H1 (cell line): ENCODE measurements at regions of chr3 and their contacts with region 1.

Region 1: GRCh38 chr3:15268033-15268631 is 62.1 kb downstream of the CAPN7 start:
- DNase-seq: peak; percentile 53 to 87
- H3K4me3 ChIP-seq: no peak overlapping the region
- H3K27ac ChIP-seq: no peak overlapping the region
- H3K4me1 ChIP-seq: no peaks in the 10 kb centered on the region; a peak in 1 of 7 replicates
- H3K27me3 ChIP-seq: no peaks in the 10 kb centered on the region
- CTCF ChIP-seq: peak; percentile 94 to 98 (median 96)
- EP300 ChIP-seq: no peak
- POLR2A ChIP-seq: no peak
- RAD21 ChIP-seq: peak; percentile 98 to 99

Region 2: DNA sequence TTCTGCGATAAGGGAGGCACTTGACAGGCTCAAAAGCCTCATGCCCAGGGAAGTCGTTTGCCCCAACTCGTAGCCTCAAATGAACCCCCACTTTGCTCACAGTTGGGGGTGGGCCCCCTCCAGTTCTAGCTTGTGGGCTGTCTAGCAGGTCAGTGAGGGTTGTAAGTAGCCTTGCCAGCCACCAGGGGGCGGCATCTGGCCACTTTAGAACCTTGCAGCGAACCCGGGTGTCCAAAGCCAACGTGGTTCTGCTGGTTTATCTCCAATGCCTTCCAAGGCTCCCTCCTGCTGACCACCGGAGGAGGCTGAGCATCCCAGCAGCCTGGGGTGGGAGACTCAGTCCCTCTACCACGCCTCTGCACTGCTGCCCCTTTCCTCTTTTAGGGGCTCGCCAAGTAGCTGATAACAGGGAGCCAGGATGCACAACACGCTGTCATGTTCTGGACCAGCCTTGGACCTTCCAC is 160.0 kb before region 1 on chr3:
- CTCF ChIA-PET with region 1: interaction called, 11 read pairs
- POLR2A ChIA-PET with region 1: no interaction called
- DNase-seq: peak; percentile 68 to 91
- H3K4me3 ChIP-seq: no peak overlapping the region
- H3K27ac ChIP-seq: no peak overlapping the region
- H3K4me1 ChIP-seq: no peaks in the 10 kb centered on the region; a peak in 1 of 7 replicates
- H3K27me3 ChIP-seq: no peaks in the 10 kb centered on the region
- CTCF ChIP-seq: peak; percentile 88 to 93 (median 89)
- EP300 ChIP-seq: no peak
- POLR2A ChIP-seq: no peak
- RAD21 ChIP-seq: peak; percentile 92 to 95

Region 3: GRCh38 chr3:15180042-15180611 is 88.0 kb before region 1 on chr3:
- CTCF ChIA-PET with region 1: no interaction called
- POLR2A ChIA-PET with region 1: no interaction called
- DNase-seq: no peak
- H3K4me3 ChIP-seq: no peak overlapping the region
- H3K27ac ChIP-seq: no peak overlapping the region
- H3K4me1 ChIP-seq: no peaks in the 10 kb centered on the region
- H3K27me3 ChIP-seq: no peaks in the 10 kb centered on the region; a peak in 2 of 7 replicates
- CTCF ChIP-seq: no peak
- EP300 ChIP-seq: no peak
- POLR2A ChIP-seq: no peak
- RAD21 ChIP-seq: no peak

Region 4: DNA sequence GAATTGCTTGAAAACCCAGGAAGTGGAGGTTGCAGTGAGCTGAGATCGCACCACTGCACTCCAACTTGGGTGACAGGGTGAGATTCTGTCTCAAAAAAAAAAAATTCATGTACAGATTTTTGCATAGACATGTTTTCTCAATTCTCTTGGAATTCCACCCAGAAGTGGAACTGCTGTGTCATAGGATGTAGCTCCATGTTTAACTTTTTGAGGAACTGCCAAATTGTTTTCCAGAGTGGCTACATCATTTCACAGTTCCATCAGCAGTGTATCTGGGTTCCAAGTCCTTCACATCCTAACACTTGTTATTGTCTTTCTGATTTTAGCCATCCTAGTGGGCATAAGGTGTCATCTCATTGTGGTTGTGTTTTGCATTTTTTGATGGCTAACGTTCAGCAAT is 52.1 kb before region 1 on chr3:
- CTCF ChIA-PET with region 1: no interaction called
- POLR2A ChIA-PET with region 1: no interaction called
- DNase-seq: no peak
- H3K4me3 ChIP-seq: no peak overlapping the region
- H3K27ac ChIP-seq: 0 out of 2 replicates have a peak overlapping the region, but pooled peaks have one; percentile 10
- H3K4me1 ChIP-seq: no peaks in the 10 kb centered on the region
- H3K27me3 ChIP-seq: no peaks in the 10 kb centered on the region
- CTCF ChIP-seq: no peak
- EP300 ChIP-seq: no peak
- POLR2A ChIP-seq: no peak
- RAD21 ChIP-seq: no peak

Region 5: GRCh38 chr3:15256861-15257341 is 11.2 kb before region 1 on chr3:
- CTCF ChIA-PET with region 1: interaction called, 42 read pairs
- POLR2A ChIA-PET with region 1: no interaction called
- DNase-seq: no peak
- H3K4me3 ChIP-seq: no peak overlapping the region
- H3K27ac ChIP-seq: no peak overlapping the region
- H3K4me1 ChIP-seq: no peaks in the 10 kb centered on the region
- H3K27me3 ChIP-seq: no peaks in the 10 kb centered on the region
- CTCF ChIP-seq: no peak
- EP300 ChIP-seq: no peak
- POLR2A ChIP-seq: no peak
- RAD21 ChIP-seq: no peak

Region 6: GRCh38 chr3:15307580-15307979 is 39.4 kb after region 1 on chr3:
- CTCF ChIA-PET with region 1: interaction called, 19 read pairs
- POLR2A ChIA-PET with region 1: interaction called, 3 read pairs
- DNase-seq: no peak
- H3K4me3 ChIP-seq: no peak overlapping the region
- H3K27ac ChIP-seq: no peak overlapping the region
- H3K4me1 ChIP-seq: peaks cover 0 to 8% (median 5%) of the 10 kb centered on the region in 4 experiments; a peak in 3 of 7 replicates
- H3K27me3 ChIP-seq: no peaks in the 10 kb centered on the region
- CTCF ChIP-seq: no peak
- EP300 ChIP-seq: no peak
- POLR2A ChIP-seq: no peak
- RAD21 ChIP-seq: no peak

Region 7: DNA sequence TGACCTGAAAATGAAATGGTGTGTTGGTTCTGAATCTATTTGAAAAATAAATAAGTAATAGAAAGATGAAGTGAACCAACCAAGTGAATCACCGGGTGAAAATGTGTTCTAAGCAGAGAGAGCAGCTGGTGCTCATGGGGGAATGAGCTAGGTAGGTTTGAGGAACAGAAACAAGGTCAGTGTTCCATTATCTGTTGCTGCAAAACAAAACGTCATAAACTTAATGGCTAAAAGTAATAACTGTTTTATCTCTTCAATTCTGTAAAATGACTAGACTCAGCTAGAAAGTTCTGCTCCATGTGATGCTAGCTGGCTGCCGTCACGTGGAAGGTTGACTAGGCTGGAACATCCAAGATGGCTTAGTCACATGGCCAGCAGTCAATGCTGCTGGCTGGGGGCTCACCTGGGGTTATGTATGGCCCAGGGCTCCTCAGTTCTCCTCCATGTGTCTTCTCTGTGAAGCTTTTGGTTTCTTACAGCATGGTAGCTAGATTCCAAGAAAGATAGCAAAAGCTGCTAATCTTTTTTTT is 77.5 kb after region 1 on chr3:
- CTCF ChIA-PET with region 1: interaction called, 25 read pairs
- POLR2A ChIA-PET with region 1: no interaction called
- DNase-seq: no peak
- H3K4me3 ChIP-seq: no peak overlapping the region
- H3K27ac ChIP-seq: no peak overlapping the region
- H3K4me1 ChIP-seq: no peaks in the 10 kb centered on the region
- H3K27me3 ChIP-seq: no peaks in the 10 kb centered on the region
- CTCF ChIP-seq: no peak
- EP300 ChIP-seq: no peak
- POLR2A ChIP-seq: no peak
- RAD21 ChIP-seq: no peak

Region 8: DNA sequence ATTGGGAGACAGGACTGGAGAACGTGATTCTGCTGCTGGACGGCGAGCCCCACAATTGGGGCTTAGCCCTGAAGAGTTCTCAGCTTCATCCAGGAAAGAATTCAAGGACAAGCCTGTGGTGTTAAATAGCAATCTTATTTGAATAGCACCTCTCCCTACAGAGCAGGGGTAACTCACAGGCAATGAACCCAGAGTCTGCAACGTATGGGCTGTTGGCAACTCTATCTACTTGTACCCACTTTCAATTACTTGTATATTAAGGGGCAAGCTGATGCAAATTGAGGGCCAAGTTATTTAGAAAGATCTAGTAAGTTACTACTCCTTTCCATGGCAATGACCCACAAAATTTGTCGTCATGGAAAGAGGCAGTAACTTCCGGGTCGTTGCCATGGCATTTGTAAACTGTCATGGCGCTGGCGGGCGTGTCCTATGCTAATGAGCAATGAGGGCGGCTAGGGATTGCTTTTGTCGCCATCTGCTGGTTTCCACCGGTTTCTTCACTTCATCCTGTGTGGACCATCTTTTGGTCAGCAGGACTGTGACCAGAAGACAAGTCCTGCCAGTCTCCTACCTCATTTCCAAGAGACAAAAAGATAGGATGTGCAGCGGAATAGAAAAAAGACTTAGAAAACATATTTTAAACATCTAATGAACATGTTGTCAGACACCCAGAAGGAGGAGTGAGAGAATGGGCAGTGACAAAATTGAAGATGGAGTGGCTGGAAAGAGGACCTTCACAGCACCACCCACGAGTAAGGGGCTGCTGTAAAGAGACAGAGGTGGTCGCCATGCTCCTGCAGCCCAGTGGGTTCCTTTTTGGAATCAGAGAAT is 110.0 kb after region 1 on chr3:
- CTCF ChIA-PET with region 1: interaction called, 50 read pairs
- POLR2A ChIA-PET with region 1: no interaction called
- DNase-seq: peak; percentile 66 to 91
- H3K4me3 ChIP-seq: peak overlapping the region in 1 of 4 experiments; percentile 32; a peak in 2 of 8 replicates
- H3K27ac ChIP-seq: peak overlapping the region; percentile 79
- H3K4me1 ChIP-seq: peaks cover 0 to 3% (median 0%) of the 10 kb centered on the region in 4 experiments; a peak in 3 of 7 replicates
- H3K27me3 ChIP-seq: no peaks in the 10 kb centered on the region
- CTCF ChIP-seq: peak; percentile 67 to 86 (median 81)
- EP300 ChIP-seq: peak in 1 of 2 experiments; percentile 59; a peak in 1 of 3 replicates
- POLR2A ChIP-seq: no peak
- RAD21 ChIP-seq: peak; percentile 81 to 85

Region 9: GRCh38 chr3:15405448-15406050 is 137.4 kb after region 1 on chr3:
- CTCF ChIA-PET with region 1: interaction called, 227 read pairs
- POLR2A ChIA-PET with region 1: interaction called, 5 read pairs
- DNase-seq: no peak
- H3K4me3 ChIP-seq: no peak overlapping the region
- H3K27ac ChIP-seq: no peak overlapping the region
- H3K4me1 ChIP-seq: no peaks in the 10 kb centered on the region
- H3K27me3 ChIP-seq: no peaks in the 10 kb centered on the region
- CTCF ChIP-seq: peak in 2 of 3 experiments; percentile 58 to 59; a peak in 3 of 4 replicates
- EP300 ChIP-seq: no peak
- POLR2A ChIP-seq: no peak
- RAD21 ChIP-seq: peak; percentile 69 to 71